HEK293 (cell line): ENCODE measurements at regions of chr20 and their contacts with region 1.

Region 1: GRCh38 chr20:46681032-46681854 is 8.0 kb downstream of the TP53RK start:
- H3K4me3 ChIP-seq: no peak overlapping the region
- H3K27ac ChIP-seq: no peak overlapping the region
- H3K4me1 ChIP-seq: no peaks in the 10 kb centered on the region
- CTCF ChIP-seq: peak; percentile 77

Region 2: DNA sequence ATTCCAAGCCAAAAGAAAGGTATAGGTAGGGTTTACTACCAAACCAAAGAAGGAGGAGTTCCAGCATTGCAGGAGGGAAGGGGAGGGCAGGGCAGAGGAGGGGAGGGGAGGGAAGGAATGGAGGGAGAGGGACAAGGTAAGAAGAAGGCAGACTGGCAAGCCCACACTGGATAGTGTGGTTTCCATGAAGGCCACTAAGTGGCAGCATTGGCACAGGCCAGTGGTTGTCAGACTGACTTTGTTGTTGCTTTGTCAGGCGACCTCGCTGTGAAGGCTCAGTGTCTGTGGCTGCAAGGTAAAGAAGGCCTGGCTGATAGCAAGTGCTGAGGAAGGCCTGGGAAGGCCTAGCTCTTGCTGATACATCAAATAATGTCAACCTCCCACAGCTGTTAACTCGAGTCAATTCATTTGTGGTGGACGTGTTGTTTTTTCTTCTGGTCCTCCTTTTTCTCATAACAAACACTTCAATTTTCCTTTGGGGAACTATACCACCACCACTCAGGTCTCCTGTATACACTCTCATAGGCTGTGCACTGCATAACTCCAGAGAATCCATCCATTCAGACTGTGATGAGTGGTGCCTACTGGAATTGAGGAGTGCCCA is 160.2 kb before region 1 on chr20:
- CTCF ChIA-PET with region 1: interaction called, 45 read pairs
- POLR2A ChIA-PET with region 1: no interaction called
- H3K4me3 ChIP-seq: no peak overlapping the region
- H3K27ac ChIP-seq: no peak overlapping the region
- H3K4me1 ChIP-seq: no peaks in the 10 kb centered on the region
- CTCF ChIP-seq: peak; percentile 39; the same call in 1 of the 2 replicates

Region 3: DNA sequence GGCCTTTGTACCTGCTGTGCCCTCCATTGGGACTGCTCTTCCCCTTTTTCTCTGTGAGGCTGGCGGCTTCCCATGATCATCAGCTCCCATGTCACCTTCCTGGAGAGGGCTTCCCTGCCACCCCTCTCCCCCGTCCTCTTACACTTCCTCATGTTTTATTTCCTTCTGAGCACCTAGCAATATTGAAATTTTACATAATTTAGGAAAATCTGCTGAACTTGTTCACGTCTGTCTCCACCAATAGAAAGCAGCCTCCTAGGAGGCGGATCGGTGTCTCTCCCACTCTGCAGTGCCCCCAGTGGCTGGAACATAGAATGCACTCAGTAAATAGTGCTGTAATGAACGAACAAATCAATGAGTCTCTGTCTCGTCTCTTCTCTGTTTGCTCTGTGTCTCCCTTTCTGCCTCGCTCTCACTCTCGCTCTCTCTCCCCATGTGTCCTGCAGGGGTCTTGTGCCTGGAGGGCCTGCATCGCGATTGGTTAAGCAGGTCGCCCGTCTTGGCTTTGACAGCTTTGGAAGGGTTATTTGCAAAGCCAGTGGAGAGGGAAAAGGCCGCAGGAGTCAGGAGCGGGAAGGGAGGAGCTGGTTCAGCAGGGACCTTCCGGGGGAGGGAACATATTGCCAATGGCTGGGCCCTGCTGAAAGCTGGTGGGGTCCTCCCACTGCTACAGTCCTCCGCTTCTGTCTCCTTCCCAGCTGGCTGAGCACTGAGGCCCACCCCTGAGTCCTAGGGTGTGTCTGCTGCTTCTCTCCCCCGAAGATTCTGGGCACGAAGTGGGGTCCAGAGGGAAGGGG is 118.7 kb before region 1 on chr20:
- CTCF ChIA-PET with region 1: interaction called, 11 read pairs
- POLR2A ChIA-PET with region 1: no interaction called
- H3K4me3 ChIP-seq: peak overlapping the region; percentile 21; the same call in 1 of the 2 replicates
- H3K27ac ChIP-seq: no peak overlapping the region; the same call in 1 of the 2 replicates
- H3K4me1 ChIP-seq: peaks cover 2% of the 10 kb centered on the region; the same call in 1 of the 2 replicates
- CTCF ChIP-seq: peak; percentile 87

Region 4: DNA sequence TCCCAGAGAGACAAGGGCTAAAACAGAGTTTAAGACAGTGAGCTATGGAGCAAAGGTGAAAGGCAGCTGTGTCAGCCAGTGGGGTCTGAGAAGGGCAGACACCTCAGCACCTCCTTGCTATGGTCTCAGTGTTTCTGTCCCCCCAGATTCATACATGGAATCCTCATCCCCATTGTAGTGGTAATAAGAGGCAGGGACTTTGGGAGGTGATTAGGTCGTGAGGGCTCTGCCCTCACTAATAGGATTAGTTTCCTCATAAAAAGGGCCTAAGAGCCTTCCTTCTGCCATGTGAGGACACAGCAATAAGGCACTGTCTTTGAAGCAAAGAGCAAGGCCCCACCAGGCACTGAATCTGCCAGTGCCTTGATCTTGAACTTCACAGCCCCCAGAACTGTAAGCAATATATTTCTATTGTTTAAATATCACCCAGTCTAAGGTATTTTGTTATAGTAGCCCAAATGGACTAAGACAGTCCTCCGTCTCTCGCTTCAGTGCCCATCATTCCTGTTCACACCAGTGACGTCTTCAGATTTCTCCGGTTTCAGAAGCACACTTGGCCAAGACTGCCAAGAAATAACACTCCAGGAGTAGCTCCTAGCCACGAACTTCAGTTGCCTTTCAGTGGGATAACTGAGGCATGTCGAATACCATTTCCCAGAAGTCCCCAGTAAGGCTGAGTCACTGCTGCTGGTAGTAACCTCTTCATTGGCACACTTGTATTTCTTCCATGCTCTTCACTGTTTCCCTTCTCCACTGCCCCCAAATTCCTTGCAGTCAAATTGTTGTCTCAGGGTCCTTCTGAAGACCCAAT is 62.7 kb before region 1 on chr20:
- CTCF ChIA-PET with region 1: no interaction called
- POLR2A ChIA-PET with region 1: no interaction called
- H3K4me3 ChIP-seq: no peak overlapping the region
- H3K27ac ChIP-seq: no peak overlapping the region
- H3K4me1 ChIP-seq: no peaks in the 10 kb centered on the region
- CTCF ChIP-seq: no peak

Region 5: GRCh38 chr20:46631874-46632446 is 49.3 kb before region 1 on chr20:
- CTCF ChIA-PET with region 1: no interaction called
- POLR2A ChIA-PET with region 1: no interaction called
- H3K4me3 ChIP-seq: no peak overlapping the region
- H3K27ac ChIP-seq: no peak overlapping the region
- H3K4me1 ChIP-seq: no peaks in the 10 kb centered on the region
- CTCF ChIP-seq: no peak

Region 6: GRCh38 chr20:46731770-46732169 is 50.5 kb after region 1 on chr20:
- CTCF ChIA-PET with region 1: no interaction called
- POLR2A ChIA-PET with region 1: no interaction called
- H3K4me3 ChIP-seq: no peak overlapping the region
- H3K27ac ChIP-seq: no peak overlapping the region
- H3K4me1 ChIP-seq: 0 out of 2 replicates have a peak, but pooled peaks cover 2% of the 10 kb centered on the region
- CTCF ChIP-seq: no peak